Panc1 (cell line): ENCODE measurements at regions of chr17 and their contacts with region 1.

Region 1: DNA sequence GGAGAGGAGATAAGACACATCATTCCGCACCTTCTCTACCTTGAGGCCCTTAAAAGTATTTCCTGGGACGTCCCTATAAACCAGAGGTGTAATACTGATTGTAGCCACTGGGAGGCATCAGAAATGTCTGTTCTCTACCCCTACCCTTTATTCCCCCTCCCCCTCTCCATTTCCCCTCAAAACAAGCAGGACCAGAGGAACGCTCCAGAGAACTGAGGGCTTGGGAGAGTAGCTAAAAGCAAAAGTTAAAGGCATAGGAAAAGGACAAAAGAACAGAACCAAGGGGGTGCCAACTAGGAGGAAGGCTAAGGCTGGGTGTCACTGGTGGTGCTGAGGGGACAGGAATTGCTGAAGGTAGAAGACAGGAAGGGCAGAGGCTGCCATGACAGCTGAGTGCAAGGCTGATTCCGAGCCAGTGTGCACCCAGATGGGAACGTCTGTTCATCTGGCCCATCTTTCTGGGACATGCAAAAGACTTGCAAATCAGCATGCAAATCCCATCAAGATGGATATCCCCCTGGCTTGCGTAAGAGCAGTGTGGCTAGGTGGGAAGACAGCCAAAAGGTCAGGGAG is 6.7 kb downstream of the CAMTA2 start:
- DNase-seq: no peak
- ATAC-seq: peak; percentile 62
- H3K4me3 ChIP-seq: no peak overlapping the region
- H3K27ac ChIP-seq: no peak overlapping the region
- H3K4me1 ChIP-seq: no peaks in the 10 kb centered on the region
- H3K27me3 ChIP-seq: no peaks in the 10 kb centered on the region
- CTCF ChIP-seq: peak; percentile 78

Region 2: GRCh38 chr17:5065227-5065744 is 84.6 kb after region 1 on chr17:
- CTCF ChIA-PET with region 1: interaction called, 3 read pairs
- POLR2A ChIA-PET with region 1: no interaction called
- in situ Hi-C with region 1: no loop called
- intact Hi-C with region 1: loop called (anchors 2 kb)
- DNase-seq: no peak
- ATAC-seq: no peak
- H3K4me3 ChIP-seq: no peak overlapping the region
- H3K27ac ChIP-seq: no peak overlapping the region
- H3K4me1 ChIP-seq: no peaks in the 10 kb centered on the region
- H3K27me3 ChIP-seq: no peaks in the 10 kb centered on the region
- CTCF ChIP-seq: no peak